ENCODE measurements at regions of chr1 and their contacts with region 1.

Region 1: GRCh38 chr1:1889847-1890505 is 911 bp downstream of the GNB1 start:
- DNase-seq: no peak
- H3K4me3 ChIP-seq: peak overlapping the region; percentile 79 to 99 (median 92)
- H3K27ac ChIP-seq: peak overlapping the region; percentile 92 to 99 (median 97)
- H3K4me1 ChIP-seq: peaks cover 54 to 76% (median 73%) of the 10 kb centered on the region in 4 donors
- H3K27me3 ChIP-seq: peaks cover 0 to 4% (median under 1%) of the 10 kb centered on the region in 4 donors
- CTCF ChIP-seq: no peak
- EP300 ChIP-seq: no peak
- POLR2A ChIP-seq: no peak

Region 2: DNA sequence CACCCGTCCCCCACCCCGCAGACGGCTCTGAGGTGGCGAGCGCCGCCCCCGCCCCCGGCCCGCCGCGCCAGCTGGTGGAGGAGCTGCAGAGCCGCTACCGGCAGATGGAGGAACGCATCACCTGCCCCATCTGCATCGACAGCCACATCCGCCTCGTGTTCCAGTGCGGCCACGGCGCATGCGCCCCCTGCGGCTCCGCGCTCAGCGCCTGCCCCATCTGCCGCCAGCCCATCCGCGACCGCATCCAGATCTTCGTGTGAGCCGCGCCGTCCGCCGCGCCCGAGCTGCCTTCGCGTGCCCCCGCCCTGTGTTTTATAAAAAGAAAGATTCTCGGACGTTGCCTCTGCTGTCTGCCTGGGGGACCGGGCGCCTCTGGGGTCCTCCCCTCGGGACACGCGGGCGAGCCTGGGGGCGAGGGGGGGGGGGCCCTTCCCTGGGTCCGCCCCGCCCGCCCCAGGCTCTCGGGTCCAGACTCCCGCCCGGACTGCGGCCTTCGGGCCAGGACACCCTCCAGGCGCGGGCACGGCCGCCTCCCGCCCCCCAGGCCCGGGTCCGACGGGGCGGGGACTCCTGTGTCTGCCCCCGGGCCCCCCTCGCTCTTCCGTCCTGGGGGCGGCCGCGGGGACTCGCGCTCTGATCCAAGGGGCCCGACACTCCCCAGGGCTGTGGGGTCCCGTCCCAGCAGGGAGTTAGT is 259.6 kb before region 1 on chr1:
- intact Hi-C with region 1: no loop called
- DNase-seq: peak; percentile 93
- H3K4me3 ChIP-seq: peak overlapping the region; percentile 41 to 54 (median 46)
- H3K27ac ChIP-seq: peak overlapping the region; percentile 77 to 87 (median 82)
- H3K4me1 ChIP-seq: peaks cover 12 to 26% (median 25%) of the 10 kb centered on the region in 4 donors
- H3K27me3 ChIP-seq: peaks cover 10 to 44% (median 22%) of the 10 kb centered on the region in 4 donors
- CTCF ChIP-seq: no peak
- EP300 ChIP-seq: no peak
- POLR2A ChIP-seq: no peak

Region 3: DNA sequence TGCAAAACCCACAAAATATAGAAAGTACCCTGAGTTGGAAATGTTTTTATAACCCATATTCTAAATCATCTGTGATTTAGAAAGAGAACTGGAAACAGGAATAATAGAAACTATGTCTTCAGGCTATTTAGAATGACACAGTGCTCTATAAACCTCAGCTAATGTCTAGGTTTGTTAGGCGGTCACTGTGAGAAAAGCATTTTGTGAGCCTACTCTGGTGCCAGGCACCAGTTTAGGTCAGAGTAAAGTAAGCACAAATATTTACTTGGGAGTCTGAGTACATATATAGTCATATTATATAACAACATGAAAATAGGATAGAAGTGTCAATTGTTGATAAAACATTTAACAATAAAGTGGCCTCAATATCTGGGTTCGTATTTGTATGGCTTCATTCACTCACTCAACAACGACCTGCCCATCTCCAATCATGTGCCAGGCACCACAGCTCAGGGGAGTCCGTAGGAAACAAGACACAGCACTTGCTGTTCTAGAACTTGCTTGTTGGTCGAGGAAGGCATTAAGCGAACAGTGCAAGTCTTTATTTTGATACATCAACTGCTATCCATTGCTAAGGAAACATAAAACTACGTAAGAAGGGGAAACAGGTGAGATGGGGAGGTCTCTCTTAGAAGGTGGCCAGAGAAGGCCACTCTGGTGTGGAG is 36.3 kb before region 1 on chr1:
- intact Hi-C with region 1: loop called (anchors 5 kb)
- DNase-seq: no peak
- H3K4me3 ChIP-seq: no peak overlapping the region
- H3K27ac ChIP-seq: no peak overlapping the region
- H3K4me1 ChIP-seq: peaks cover 48 to 82% (median 65%) of the 10 kb centered on the region in 4 donors
- H3K27me3 ChIP-seq: no peaks in the 10 kb centered on the region
- CTCF ChIP-seq: no peak
- EP300 ChIP-seq: no peak
- POLR2A ChIP-seq: no peak